ENCODE measurements at regions of chr1 and their contacts with region 1.

Region 1: DNA sequence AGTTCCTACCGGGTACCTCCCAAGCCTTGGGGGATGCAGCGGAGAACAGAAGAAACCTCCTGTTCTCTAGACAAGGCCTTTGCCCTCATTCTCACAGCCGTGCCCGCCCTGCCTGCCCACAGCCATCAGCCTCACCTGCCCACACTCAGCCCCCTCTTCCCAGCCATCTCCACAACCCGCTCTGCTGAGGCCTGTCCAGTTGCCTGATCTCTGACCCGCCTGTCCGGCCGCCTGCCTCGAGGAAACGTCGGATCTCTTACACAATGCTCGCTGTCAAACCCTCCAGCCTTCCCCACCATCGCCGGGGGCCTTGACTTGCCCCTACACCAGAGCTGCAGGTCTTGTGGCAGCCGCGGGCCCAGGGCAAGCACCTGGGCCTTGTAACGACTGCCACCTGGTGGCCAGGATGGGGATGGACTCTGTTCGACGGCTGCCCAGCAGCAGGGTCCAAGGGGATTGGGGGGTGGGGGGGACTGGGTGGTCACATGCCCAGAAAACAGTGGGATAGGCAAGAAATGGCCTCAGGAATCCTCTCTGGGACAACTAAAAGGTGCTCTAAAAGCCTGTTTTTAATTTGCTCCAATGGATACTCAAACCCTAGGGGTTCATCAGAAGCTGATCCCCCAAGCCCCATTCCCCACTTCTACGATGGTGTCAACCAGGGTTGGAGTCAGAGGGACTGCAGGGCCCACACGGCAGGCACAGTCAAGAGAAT is 31.0 kb downstream of the SLC45A1 start:
- DNase-seq: peak; percentile 46 to 73
- ATAC-seq: peak; percentile 70

Region 2: GRCh38 chr1:7983086-7983778 is 365.7 kb before region 1 on chr1:
- intact Hi-C with region 1: loop called in 1 of 2 experiments (anchors 5 kb)
- DNase-seq: no peak
- ATAC-seq: no peak

Region 3: DNA sequence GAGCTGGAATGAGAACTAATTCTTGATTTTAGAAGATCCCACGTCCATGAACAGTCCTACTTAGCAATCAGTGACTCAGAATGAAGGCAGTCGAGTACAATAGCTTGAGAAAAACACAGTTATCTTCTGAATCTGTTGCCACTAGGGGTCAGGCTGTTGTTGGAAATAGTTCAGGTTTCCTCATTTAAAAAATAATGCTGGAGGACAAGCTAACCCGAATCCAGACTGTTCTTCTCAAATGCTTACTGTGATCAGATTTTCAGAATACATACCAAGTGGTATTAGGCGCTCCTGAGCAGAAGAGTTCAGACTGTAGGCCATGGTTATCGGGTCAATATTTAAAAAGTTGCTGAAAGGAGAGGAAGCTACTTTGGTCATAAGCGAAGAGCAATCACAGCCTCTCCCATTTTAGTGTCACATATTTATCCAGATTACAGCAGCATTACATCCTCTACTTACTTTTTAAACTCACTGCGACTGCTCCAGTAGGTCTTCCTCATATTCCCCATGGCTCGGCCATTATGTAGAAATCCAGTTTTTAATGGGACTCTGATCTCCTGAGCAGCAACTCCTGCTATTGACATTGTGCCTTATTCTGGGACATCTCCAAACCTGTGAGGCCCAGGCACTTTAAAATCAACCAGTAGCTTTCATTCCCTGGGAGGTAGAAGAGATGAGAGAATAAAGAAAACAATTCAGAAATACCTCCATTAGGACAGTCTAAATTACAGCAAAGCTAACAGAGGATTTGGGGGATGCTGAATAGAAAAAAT is 333.7 kb before region 1 on chr1:
- intact Hi-C with region 1: loop called (anchors 10 kb)
- DNase-seq: peak in 1 of 2 donors; percentile 41
- ATAC-seq: peak; percentile 60

Region 4: GRCh38 chr1:8040586-8040985 is 308.3 kb before region 1 on chr1:
- intact Hi-C with region 1: no loop called
- DNase-seq: peak; percentile 83 to 89
- ATAC-seq: peak; percentile 93

Region 5: GRCh38 chr1:8314346-8315280 is 34.3 kb before region 1 on chr1:
- intact Hi-C with region 1: no loop called
- DNase-seq: peak; percentile 69 to 79
- ATAC-seq: peak; percentile 94

Region 6: GRCh38 chr1:8727809-8728213 is 378.9 kb after region 1 on chr1:
- intact Hi-C with region 1: loop called in 1 of 2 experiments (anchors 5 kb)
- DNase-seq: no peak
- ATAC-seq: no peak

Measured in left colon (tissue), 2 donors.